ENCODE measurements at regions of chr20 and their contacts with region 1.

Region 1: GRCh38 chr20:49484180-49485140 is 2.0 kb upstream of the KCNB1 start:
- DNase-seq: peak; percentile 89
- H3K4me3 ChIP-seq: peak overlapping the region; percentile 51 to 56
- H3K27ac ChIP-seq: no peak overlapping the region
- H3K4me1 ChIP-seq: peaks cover 11% of the 10 kb centered on the region
- H3K27me3 ChIP-seq: no peaks in the 10 kb centered on the region
- CTCF ChIP-seq: peak; percentile 73 to 80 (median 78)
- POLR2A ChIP-seq: no peak

Region 2: DNA sequence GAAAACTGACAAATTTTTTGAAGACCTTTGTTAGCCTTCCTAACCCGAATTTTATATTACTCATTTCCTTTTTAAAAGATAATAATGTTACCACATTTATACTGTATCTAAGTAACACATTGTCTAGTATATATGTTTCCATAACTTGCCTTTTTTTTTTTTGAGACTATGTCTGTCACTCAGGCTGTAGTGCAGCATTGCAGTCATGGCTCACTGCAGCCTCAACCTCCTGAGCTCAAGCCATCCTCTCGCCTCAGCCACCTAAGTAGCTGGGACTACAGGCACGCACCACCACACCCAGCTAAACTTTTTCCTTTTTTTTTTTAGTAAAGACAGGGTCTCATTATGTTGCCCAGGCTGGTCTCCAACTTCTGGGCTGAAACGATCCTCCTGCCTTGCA is 225.2 kb before region 1 on chr20:
- intact Hi-C with region 1: no loop called
- DNase-seq: no peak
- H3K4me3 ChIP-seq: no peak overlapping the region
- H3K27ac ChIP-seq: no peak overlapping the region
- H3K4me1 ChIP-seq: no peaks in the 10 kb centered on the region
- H3K27me3 ChIP-seq: no peaks in the 10 kb centered on the region
- CTCF ChIP-seq: no peak
- POLR2A ChIP-seq: no peak

Region 3: GRCh38 chr20:49338061-49338460 is 146.4 kb before region 1 on chr20:
- intact Hi-C with region 1: loop called (anchors 5 kb)
- DNase-seq: no peak
- H3K4me3 ChIP-seq: no peak overlapping the region
- H3K27ac ChIP-seq: no peak overlapping the region
- H3K4me1 ChIP-seq: no peaks in the 10 kb centered on the region
- H3K27me3 ChIP-seq: no peaks in the 10 kb centered on the region
- CTCF ChIP-seq: no peak
- POLR2A ChIP-seq: no peak